ENCODE measurements at regions of chr16 and their contacts with region 1.

Region 1: GRCh38 chr16:4550591-4550990 is 5.5 kb upstream of the C16orf96 start:
- DNase-seq: no peak
- ATAC-seq: no peak
- H3K4me3 Mint-ChIP-seq: no peak overlapping the region
- H3K27ac Mint-ChIP-seq: no peak overlapping the region
- H3K4me1 Mint-ChIP-seq: peaks cover 5% of the 10 kb centered on the region
- H3K27me3 Mint-ChIP-seq: peaks cover 4% of the 10 kb centered on the region

Region 2: GRCh38 chr16:4500272-4500671 is 50.3 kb before region 1 on chr16:
- CTCF ChIA-PET with region 1: interaction called, 136 read pairs
- DNase-seq: no peak
- ATAC-seq: no peak
- H3K4me3 Mint-ChIP-seq: no peak overlapping the region
- H3K27ac Mint-ChIP-seq: no peak overlapping the region
- H3K4me1 Mint-ChIP-seq: peaks cover 83% of the 10 kb centered on the region
- H3K27me3 Mint-ChIP-seq: no peaks in the 10 kb centered on the region

Region 3: DNA sequence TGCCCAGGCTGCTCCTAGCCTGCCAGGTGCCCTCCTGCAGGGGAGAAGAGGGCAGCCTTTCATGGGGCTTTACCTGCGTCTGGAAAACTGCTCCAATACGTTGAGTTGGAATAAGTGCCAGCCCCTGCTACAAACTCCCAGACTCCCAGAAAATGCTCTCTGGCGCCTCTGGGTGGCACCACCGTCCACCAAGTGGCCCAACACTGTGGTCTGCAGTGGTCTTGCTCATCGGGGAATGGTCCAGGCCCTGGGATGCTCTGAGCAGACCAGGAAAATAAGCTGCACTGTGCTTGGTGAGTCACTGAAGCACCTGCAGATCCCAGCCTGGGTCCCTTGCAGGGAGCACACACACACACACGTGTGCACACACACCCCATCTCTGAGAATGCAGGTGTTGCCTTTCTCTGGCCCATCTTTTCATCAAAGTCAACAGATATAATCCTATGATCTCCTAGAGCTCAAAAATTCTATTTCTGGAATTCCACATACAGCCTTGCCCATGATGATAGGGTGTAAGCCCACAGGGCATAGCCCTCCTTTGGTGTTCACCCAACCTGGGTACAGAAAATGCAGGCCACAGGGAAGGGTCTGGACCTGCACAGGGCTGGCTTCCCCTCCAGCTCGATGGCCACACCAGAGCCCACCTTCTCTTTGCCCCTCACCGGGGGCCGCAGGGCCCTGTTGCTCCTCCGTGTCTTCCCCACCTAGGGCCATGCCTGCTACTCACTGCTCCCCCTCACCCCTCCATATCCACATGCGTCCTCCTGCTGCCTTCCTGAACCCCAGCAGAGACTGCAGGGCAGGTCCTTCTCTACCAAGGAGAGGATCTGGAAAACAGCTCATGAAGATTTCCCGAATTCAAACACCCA is 32.5 kb before region 1 on chr16:
- CTCF ChIA-PET with region 1: interaction called, 18 read pairs
- DNase-seq: no peak
- ATAC-seq: no peak
- H3K4me3 Mint-ChIP-seq: no peak overlapping the region
- H3K27ac Mint-ChIP-seq: peak overlapping the region; percentile 39
- H3K4me1 Mint-ChIP-seq: peaks cover 40% of the 10 kb centered on the region
- H3K27me3 Mint-ChIP-seq: no peaks in the 10 kb centered on the region

Region 4: GRCh38 chr16:4531811-4532210 is 18.8 kb before region 1 on chr16:
- CTCF ChIA-PET with region 1: interaction called, 22 read pairs
- DNase-seq: no peak
- ATAC-seq: no peak
- H3K4me3 Mint-ChIP-seq: no peak overlapping the region
- H3K27ac Mint-ChIP-seq: no peak overlapping the region
- H3K4me1 Mint-ChIP-seq: peaks cover 61% of the 10 kb centered on the region
- H3K27me3 Mint-ChIP-seq: no peaks in the 10 kb centered on the region

Region 5: DNA sequence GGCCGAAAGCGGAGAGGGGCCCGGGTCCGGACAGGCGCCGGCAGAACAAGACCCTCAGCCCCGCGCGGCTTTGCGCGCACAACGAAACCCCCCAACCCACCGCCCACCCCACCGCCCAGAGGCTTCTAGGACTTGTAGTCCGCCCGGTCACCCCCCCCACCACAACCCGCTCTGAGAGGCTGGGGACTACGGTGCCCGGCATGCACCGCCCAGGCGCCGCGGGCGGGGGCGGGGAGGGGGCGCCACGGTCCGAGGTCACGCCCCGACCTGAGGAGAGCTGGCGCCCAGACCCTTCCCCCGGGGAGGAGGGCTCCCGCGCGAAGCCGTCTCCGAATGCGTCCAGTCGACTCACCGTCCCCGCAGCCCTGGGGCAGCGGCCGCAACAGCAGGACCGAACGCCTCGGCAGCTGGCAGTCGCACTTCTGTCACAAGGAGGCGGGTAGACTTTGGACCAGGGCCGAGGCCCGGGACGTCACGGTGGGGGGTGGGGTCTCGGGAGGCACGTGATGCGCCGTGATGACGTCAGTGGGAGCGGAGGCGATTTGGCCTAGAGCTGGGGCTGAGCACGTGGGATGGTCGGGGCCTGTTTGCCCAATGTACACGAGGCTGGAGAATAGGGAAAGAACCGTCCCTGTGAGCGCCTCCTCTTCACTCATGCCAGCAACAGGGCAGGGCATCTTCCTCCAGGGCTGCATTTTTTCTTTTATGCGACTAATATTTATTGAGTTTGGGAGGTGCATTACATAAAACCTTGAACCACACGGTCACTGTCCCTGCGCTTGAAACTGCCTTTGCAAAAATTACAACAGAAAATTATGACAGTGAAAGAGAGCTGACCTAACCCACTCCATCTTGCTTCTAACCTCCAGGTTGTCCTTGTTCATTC is 12.0 kb before region 1 on chr16 and contains the start of gene CDIP1:
- CTCF ChIA-PET with region 1: interaction called, 22 read pairs
- DNase-seq: peak; percentile 97
- ATAC-seq: peak; percentile 85
- H3K4me3 Mint-ChIP-seq: peak within 1 kb of the TSS; percentile 67
- H3K27ac Mint-ChIP-seq: peak within 1 kb of the TSS; percentile 72
- H3K4me1 Mint-ChIP-seq: peaks cover 37% of the 10 kb centered on the region
- H3K27me3 Mint-ChIP-seq: no peaks in the 10 kb centered on the region
- total RNA-seq, gene CDIP1: 45.2 to 57.3 TPM

Region 6: GRCh38 chr16:4561596-4561995 is 11.0 kb after region 1 on chr16:
- CTCF ChIA-PET with region 1: interaction called, 38 read pairs
- DNase-seq: no peak
- ATAC-seq: no peak
- H3K4me3 Mint-ChIP-seq: no peak overlapping the region
- H3K27ac Mint-ChIP-seq: no peak overlapping the region
- H3K4me1 Mint-ChIP-seq: peaks cover 8% of the 10 kb centered on the region
- H3K27me3 Mint-ChIP-seq: peaks cover 3% of the 10 kb centered on the region

Region 7: DNA sequence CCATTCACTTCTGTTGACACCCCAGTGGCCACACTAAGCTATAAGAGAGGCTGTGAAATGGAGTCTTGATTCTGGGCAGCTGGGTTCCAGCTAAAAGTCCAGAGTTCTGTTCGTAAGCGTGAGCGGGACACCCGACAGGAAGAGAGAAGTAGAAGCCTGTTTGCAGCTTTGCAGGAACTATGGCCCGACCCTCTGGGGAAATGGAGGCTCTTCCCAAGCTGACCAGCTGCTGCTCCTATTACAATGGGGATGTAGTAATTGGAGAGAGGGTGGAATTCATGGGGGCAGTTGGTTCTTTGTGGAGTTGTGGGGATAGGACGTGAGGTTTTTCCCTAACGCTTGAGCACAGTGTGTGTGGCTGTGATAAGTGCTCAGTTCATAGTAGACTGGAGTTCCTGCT is 35.7 kb after region 1 on chr16:
- CTCF ChIA-PET with region 1: interaction called, 11 read pairs
- DNase-seq: no peak
- ATAC-seq: no peak
- H3K4me3 Mint-ChIP-seq: no peak overlapping the region
- H3K27ac Mint-ChIP-seq: no peak overlapping the region
- H3K4me1 Mint-ChIP-seq: peaks cover 3% of the 10 kb centered on the region
- H3K27me3 Mint-ChIP-seq: peaks cover 13% of the 10 kb centered on the region

Measured in activated CD8-positive, alpha-beta memory T cell treated with anti-CD3 and anti-CD28 coated beads, Interleukin-2, amount 10 ng/mL, durations not matched to agents 7 days and 5 days (primary cell).